H1 (cell line): ENCODE measurements at regions of chr10 and their contacts with region 1.

Region 1: DNA sequence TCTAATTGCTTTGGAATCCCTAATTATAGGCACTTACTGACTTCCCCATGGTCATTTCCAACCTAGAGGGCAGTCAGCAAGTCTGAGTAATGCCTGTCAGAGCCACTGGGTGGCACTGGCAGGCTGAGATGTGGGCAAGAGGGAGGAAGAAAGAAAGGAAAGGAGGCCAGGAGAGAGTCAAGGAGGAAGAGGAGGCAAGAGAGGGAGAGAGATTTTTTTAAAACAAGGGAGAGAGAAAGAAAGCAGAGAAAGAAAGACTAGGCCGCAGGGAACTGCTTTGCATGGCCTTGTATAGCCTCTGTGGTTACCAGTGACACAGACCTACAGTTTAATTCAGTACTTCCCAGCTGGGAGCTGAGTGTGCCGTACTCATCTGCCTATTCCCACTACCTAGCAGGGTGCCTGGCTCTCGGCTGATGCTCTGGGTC is 210.4 kb upstream of the ADO start:
- DNase-seq: peak; percentile 43 to 74
- H3K4me3 ChIP-seq: no peak overlapping the region
- H3K27ac ChIP-seq: no peak overlapping the region
- H3K4me1 ChIP-seq: peaks cover 0 to 2% (median 0%) of the 10 kb centered on the region in 4 experiments; a peak in 1 of 7 replicates
- H3K27me3 ChIP-seq: no peaks in the 10 kb centered on the region
- CTCF ChIP-seq: peak; percentile 83 to 93 (median 87)
- EP300 ChIP-seq: no peak
- POLR2A ChIP-seq: no peak
- RAD21 ChIP-seq: peak; percentile 96 to 97

Region 2: DNA sequence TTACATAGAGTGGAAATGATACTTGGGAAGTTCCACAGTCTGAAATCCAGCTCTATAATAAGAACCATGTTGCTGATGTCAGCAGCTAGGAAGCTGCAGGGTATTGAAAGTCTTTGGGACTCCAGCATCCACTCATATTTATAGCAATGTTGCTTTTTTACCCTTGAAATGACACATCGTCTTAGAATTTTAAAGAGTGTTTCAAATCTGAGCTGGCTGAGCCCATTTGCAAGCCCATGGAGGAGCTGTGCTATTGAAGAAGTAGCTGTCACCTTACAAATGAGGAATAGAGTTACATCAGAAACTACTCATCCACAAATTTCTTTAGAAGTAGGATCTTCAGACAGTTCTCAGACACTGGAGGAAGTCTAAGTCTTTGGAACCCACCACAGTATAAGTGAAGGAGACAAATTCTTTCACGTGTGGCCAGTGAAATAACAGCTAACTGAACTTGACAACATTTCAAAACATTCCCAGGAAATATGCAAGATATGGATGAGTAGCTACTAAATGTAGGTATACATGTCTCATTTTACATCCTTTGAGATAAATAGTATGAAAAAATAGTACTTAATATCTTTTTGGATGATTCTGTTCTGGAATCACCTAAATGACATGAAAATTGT is 16.3 kb before region 1 on chr10:
- CTCF ChIA-PET with region 1: interaction called, 10 read pairs
- POLR2A ChIA-PET with region 1: no interaction called
- DNase-seq: no peak
- H3K4me3 ChIP-seq: no peak overlapping the region
- H3K27ac ChIP-seq: no peak overlapping the region
- H3K4me1 ChIP-seq: no peaks in the 10 kb centered on the region
- H3K27me3 ChIP-seq: peaks cover 0 to 1% (median 0%) of the 10 kb centered on the region in 4 experiments; a peak in 2 of 7 replicates
- CTCF ChIP-seq: no peak
- EP300 ChIP-seq: no peak
- POLR2A ChIP-seq: no peak
- RAD21 ChIP-seq: no peak

Region 3: GRCh38 chr10:62583876-62584615 is 10.1 kb before region 1 on chr10:
- CTCF ChIA-PET with region 1: interaction called, 13 read pairs
- POLR2A ChIA-PET with region 1: no interaction called
- DNase-seq: no peak
- H3K4me3 ChIP-seq: no peak overlapping the region
- H3K27ac ChIP-seq: no peak overlapping the region
- H3K4me1 ChIP-seq: no peaks in the 10 kb centered on the region
- H3K27me3 ChIP-seq: peaks cover 0 to under 1% (median 0%) of the 10 kb centered on the region in 4 experiments; a peak in 2 of 7 replicates
- CTCF ChIP-seq: no peak
- EP300 ChIP-seq: no peak
- POLR2A ChIP-seq: no peak
- RAD21 ChIP-seq: no peak

Region 4: DNA sequence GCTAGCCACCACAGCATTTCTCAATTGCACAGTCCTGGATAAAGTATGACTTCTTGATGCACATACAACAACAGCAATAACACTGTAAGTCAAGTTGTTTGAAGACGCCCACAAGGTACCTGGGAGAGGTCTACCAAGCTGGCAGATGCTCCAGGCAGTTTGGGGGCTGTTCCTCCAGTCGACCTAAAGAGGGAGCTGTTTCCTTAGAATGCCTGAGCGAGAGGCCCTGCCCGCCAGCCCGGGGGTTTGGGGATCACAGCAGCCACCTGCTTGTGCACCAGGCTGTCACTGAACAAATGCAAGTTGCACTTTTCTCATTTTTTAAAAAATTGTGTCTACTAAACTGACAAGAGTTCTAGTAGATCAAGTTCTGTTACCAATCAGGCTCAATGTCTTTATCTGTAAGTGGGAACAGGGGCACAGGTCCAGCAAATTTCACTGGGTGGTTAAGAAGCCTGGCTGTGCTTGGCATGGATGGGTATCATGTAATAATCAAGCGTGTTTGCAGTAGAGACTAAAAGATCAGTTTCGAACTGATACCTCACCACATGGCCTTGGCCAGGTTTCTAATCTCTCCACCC is 16.6 kb after region 1 on chr10:
- CTCF ChIA-PET with region 1: interaction called, 17 read pairs
- POLR2A ChIA-PET with region 1: interaction called, 3 read pairs
- DNase-seq: peak; percentile 47 to 83
- H3K4me3 ChIP-seq: no peak overlapping the region
- H3K27ac ChIP-seq: no peak overlapping the region
- H3K4me1 ChIP-seq: no peaks in the 10 kb centered on the region
- H3K27me3 ChIP-seq: no peaks in the 10 kb centered on the region; a peak in 1 of 7 replicates
- CTCF ChIP-seq: peak; percentile 88 to 97 (median 94)
- EP300 ChIP-seq: no peak
- POLR2A ChIP-seq: no peak
- RAD21 ChIP-seq: peak; percentile 98 to 99

Region 5: GRCh38 chr10:62707810-62708209 is 113.7 kb after region 1 on chr10:
- CTCF ChIA-PET with region 1: no interaction called
- POLR2A ChIA-PET with region 1: no interaction called
- DNase-seq: no peak
- H3K4me3 ChIP-seq: no peak overlapping the region
- H3K27ac ChIP-seq: no peak overlapping the region
- H3K4me1 ChIP-seq: no peaks in the 10 kb centered on the region
- H3K27me3 ChIP-seq: no peaks in the 10 kb centered on the region
- CTCF ChIP-seq: no peak
- EP300 ChIP-seq: no peak
- POLR2A ChIP-seq: no peak
- RAD21 ChIP-seq: no peak

Region 6: DNA sequence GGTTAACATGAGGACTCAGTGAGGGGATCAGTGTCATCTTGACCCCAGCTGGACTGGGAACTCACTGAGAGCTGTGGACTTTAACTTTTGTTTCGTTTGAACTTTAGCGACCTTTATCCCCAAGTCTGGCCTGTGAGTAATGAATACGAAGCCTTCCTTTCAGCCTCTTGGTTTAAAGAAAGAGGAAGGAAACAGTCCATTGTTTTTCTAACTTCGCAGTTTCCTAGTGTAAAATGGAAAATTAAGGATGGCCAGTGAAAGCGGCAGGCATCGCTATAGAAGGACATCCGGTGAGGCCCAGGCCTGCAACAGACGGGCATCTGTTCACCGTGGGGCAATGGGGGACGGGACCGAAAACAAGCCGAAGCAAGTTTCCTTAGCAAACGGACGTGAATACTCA is 166.3 kb after region 1 on chr10:
- CTCF ChIA-PET with region 1: no interaction called
- POLR2A ChIA-PET with region 1: no interaction called
- DNase-seq: no peak
- H3K4me3 ChIP-seq: no peak overlapping the region
- H3K27ac ChIP-seq: no peak overlapping the region
- H3K4me1 ChIP-seq: no peaks in the 10 kb centered on the region
- H3K27me3 ChIP-seq: no peaks in the 10 kb centered on the region
- CTCF ChIP-seq: no peak
- EP300 ChIP-seq: no peak
- POLR2A ChIP-seq: no peak
- RAD21 ChIP-seq: no peak

Region 7: DNA sequence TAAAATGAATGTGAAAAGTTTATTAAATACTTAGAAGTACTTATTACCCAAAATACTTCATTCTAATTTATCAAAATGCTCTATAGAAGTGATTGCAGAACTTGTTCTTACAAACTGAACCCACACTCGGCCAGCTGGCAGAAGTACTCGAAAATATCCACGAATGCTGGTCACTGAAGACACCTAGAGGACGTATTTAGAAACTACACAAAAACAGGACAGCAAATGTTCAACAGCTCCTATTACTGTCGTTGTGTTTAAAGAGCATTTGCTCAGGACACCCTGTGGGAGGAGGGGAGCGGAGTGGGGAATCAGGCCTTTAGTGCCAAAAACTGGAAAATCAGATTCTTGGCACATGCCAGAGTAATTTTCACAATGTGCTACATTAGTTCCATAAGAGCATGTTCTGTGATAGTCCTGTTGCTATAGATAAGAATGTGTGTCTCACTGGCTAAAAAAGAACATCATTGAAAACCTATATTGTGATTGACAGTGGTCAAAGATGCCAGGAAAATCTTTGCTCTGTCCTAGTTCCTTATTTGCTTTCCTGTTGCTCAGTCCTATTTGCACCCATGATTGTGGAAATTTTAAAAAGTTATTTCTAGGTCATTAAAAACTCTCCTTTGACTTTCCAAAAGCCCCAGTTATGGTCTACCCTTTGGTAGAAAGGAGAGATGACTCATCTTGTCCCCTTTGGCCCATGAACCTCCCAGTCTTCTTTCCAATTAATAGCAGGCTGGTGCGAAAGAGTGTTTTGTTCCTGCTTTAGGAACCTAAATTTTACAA is 490.0 kb after region 1 on chr10:
- CTCF ChIA-PET with region 1: interaction called, 13 read pairs
- POLR2A ChIA-PET with region 1: no interaction called
- DNase-seq: peak in 1 of 2 experiments; percentile 19
- H3K4me3 ChIP-seq: no peak overlapping the region
- H3K27ac ChIP-seq: no peak overlapping the region
- H3K4me1 ChIP-seq: no peaks in the 10 kb centered on the region
- H3K27me3 ChIP-seq: no peaks in the 10 kb centered on the region
- CTCF ChIP-seq: peak in 2 of 3 experiments; percentile 74 to 75; a peak in 3 of 4 replicates
- EP300 ChIP-seq: no peak
- POLR2A ChIP-seq: no peak
- RAD21 ChIP-seq: peak; percentile 92 to 94